ENCODE measurements at regions of chr3 and their contacts with region 1.

Region 1: DNA sequence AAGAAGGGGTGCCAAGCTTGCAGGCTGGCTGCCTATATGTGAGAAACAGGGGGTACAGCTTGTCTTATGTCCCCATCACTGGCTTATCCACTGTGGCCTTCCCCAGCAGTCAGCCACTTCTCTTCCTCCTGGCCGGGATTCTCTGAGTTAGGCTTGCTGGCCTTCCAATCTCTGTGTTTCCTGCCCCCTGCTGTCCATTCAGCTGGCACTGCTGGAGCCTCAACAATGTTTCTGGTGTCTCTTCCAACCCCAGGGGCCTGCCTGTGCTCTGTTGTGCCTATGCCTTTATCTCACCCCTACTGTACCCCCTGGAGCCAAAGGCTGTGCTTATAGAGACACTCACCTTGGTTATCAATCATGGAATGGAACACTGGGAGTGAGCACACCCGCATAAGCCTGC is 36.5 kb downstream of the ANAPC13 start:
- DNase-seq: no peak
- ATAC-seq: peak in 4 of 8 donors; percentile 19 to 66 (median 46)
- H3K4me3 ChIP-seq: no peak overlapping the region
- H3K27ac ChIP-seq: no peak overlapping the region
- H3K4me1 ChIP-seq: peaks cover 6 to 31% (median 26%) of the 10 kb centered on the region in 9 donors
- H3K27me3 ChIP-seq: peaks cover 0 to 2% (median 0%) of the 10 kb centered on the region in 7 donors
- CTCF ChIP-seq: peak in 8 of 9 donors; percentile 14 to 51 (median 38)

Region 2: GRCh38 chr3:134326760-134327593 is 122.3 kb before region 1 on chr3:
- intact Hi-C with region 1: no loop called
- DNase-seq: no peak
- ATAC-seq: peak; percentile 60 to 93 (median 68)
- H3K4me3 ChIP-seq: no peak overlapping the region
- H3K27ac ChIP-seq: peak overlapping the region in 9 of 10 donors; percentile 17 to 73 (median 38)
- H3K4me1 ChIP-seq: peaks cover 20 to 49% (median 42%) of the 10 kb centered on the region in 9 donors
- H3K27me3 ChIP-seq: no peaks in the 10 kb centered on the region
- CTCF ChIP-seq: no peak

Region 3: DNA sequence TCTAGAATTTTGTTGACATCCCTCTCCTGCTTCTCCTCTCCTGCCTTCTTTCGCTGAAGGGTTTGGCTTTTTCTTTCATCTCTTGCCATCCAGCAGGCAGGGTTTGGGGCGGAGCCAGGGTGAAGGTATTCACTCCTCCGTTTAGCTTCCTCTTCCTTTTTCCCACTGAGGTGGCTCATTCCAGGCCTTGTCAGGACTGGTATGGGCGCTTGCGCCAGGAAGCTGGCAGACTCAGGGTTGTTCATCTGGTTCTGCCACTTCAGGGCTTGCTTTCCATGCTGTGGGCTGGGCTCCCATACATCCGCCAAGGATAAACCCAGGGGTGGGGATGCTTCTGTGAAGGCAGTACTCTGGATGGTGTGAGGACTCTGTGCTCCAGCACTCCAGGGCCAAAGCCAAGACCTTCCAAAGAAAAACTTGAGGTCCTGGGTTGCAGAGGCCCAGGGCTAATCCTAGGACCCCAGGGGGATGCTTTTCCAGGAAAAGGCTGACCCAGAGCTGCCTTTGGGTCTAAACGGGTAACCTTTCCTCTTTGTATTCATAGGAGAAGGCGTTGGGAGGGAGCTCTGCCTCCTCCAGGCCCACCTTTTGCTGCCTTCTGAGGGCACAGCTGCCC is 67.3 kb before region 1 on chr3:
- intact Hi-C with region 1: loop called in 1 of 10 experiments (anchors 5 kb)
- DNase-seq: no peak
- ATAC-seq: no peak
- H3K4me3 ChIP-seq: no peak overlapping the region
- H3K27ac ChIP-seq: peak overlapping the region in 1 of 10 donors; percentile 49
- H3K4me1 ChIP-seq: peaks cover 2 to 16% (median 7%) of the 10 kb centered on the region in 9 donors
- H3K27me3 ChIP-seq: no peaks in the 10 kb centered on the region
- CTCF ChIP-seq: no peak

Region 4: GRCh38 chr3:134392336-134392983 is 56.8 kb before region 1 on chr3:
- intact Hi-C with region 1: loop called in 2 of 10 experiments (anchors 5 to 10 kb)
- DNase-seq: peak in 1 of 2 donors; percentile 68
- ATAC-seq: peak; percentile 65 to 84 (median 78)
- H3K4me3 ChIP-seq: no peak overlapping the region
- H3K27ac ChIP-seq: peak overlapping the region in 7 of 10 donors; percentile 17 to 64 (median 46)
- H3K4me1 ChIP-seq: peaks cover 0 to 43% (median 17%) of the 10 kb centered on the region in 9 donors
- H3K27me3 ChIP-seq: no peaks in the 10 kb centered on the region
- CTCF ChIP-seq: no peak

Region 5: DNA sequence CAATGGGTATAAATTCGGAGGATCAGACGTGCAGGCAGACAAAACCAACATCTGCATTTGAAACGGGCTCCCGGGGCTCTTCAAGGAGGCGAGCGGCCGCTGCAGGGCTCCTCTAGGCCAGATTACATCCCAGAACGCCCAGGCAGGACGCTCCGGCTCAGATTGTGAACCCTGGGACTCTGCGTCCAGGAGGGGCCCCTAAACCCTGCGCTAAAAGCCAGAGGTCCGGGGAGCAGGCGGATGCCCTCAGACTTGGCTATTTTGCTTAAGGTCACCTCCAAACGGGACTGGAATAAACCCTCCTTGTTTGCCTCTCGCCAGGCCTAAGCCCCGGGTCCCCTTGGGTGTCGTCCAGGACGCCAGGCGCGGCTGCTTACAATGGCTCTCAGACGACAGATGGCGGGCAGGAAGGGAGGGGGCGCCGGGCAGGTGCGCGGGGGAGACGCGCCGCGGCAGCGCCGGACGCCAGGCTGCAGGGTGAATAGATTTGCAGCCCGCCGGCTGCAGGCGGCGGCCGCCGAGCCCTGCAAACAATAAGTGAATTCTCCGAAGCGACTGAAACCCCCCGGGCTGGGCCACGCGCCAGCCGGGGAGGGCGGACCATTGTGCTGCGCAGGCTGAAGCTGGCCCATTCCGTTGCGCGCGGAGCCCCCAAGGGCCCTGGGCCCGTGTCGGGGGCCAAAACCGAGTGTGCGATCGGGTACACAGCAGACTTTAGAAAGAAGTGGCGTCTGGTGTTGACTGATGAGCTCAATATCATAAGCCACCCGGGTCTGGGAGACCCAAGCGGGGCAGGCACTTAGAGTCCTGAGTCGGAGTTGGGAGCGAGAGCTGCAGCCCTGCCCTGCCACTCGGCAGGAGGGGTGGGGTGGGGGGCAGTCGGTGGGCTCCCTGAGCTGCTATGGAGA is 42.7 kb before region 1 on chr3:
- intact Hi-C with region 1: loop called in 2 of 10 experiments (anchors 2 to 5 kb)
- DNase-seq: peak; percentile 60 to 66
- ATAC-seq: peak; percentile 70 to 83 (median 82)
- H3K4me3 ChIP-seq: peak overlapping the region; percentile 41 to 59 (median 54)
- H3K27ac ChIP-seq: peak overlapping the region in 5 of 10 donors; percentile 10 to 51 (median 30)
- H3K4me1 ChIP-seq: peaks cover 4 to 20% (median 15%) of the 10 kb centered on the region in 9 donors
- H3K27me3 ChIP-seq: peaks cover 0 to 44% (median 0%) of the 10 kb centered on the region in 7 donors
- CTCF ChIP-seq: no peak

Measured in heart right ventricle (tissue), 16 donors.